ENCODE measurements at regions of chr14 and their contacts with region 1.

Region 1: GRCh38 chr14:103023881-103024473 is 33.4 kb downstream of the CDC42BPB start:
- DNase-seq: no peak
- H3K4me3 ChIP-seq: no peak overlapping the region
- H3K27ac ChIP-seq: peak overlapping the region; percentile 89
- H3K4me1 ChIP-seq: peaks cover 63% of the 10 kb centered on the region
- H3K27me3 ChIP-seq: no peaks in the 10 kb centered on the region
- CTCF ChIP-seq: no peak

Region 2: GRCh38 chr14:103141119-103141796 is 117.3 kb after region 1 on chr14:
- CTCF ChIA-PET with region 1: no interaction called
- POLR2A ChIA-PET with region 1: no interaction called
- intact Hi-C with region 1: no loop called
- DNase-seq: peak; percentile 78 to 84
- H3K4me3 ChIP-seq: no peak overlapping the region
- H3K27ac ChIP-seq: 0 out of 2 replicates have a peak overlapping the region, but pooled peaks have one; percentile 30
- H3K4me1 ChIP-seq: peaks cover 59% of the 10 kb centered on the region
- H3K27me3 ChIP-seq: no peaks in the 10 kb centered on the region
- CTCF ChIP-seq: peak; percentile 99

Region 3: DNA sequence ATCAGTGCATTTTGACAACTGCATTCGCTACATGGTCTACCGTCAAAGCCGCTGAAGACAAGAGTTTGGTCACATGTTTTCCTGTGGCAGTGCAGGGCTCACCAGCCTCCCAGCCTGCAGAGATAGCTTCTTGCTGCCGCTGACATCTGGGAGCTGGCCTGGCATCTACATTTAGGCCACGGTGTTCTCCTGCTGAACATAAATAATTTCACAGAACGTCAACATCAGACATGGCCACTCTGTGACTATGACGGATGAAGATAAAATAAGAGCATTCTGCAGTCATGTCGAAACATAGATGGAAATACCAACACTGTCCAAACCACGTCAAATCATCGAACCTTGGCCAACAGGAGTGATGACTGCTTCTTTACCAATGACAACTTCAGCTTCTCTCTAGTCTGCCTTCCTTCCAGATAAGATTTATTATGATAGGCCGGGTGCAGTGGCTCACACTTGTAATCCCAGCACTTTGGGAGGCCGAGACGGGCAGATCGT is 190.5 kb after region 1 on chr14:
- CTCF ChIA-PET with region 1: interaction called, 17 read pairs
- POLR2A ChIA-PET with region 1: no interaction called
- intact Hi-C with region 1: no loop called
- DNase-seq: no peak
- H3K4me3 ChIP-seq: no peak overlapping the region
- H3K27ac ChIP-seq: no peak overlapping the region
- H3K4me1 ChIP-seq: peaks cover 17% of the 10 kb centered on the region
- H3K27me3 ChIP-seq: no peaks in the 10 kb centered on the region
- CTCF ChIP-seq: no peak

Region 4: DNA sequence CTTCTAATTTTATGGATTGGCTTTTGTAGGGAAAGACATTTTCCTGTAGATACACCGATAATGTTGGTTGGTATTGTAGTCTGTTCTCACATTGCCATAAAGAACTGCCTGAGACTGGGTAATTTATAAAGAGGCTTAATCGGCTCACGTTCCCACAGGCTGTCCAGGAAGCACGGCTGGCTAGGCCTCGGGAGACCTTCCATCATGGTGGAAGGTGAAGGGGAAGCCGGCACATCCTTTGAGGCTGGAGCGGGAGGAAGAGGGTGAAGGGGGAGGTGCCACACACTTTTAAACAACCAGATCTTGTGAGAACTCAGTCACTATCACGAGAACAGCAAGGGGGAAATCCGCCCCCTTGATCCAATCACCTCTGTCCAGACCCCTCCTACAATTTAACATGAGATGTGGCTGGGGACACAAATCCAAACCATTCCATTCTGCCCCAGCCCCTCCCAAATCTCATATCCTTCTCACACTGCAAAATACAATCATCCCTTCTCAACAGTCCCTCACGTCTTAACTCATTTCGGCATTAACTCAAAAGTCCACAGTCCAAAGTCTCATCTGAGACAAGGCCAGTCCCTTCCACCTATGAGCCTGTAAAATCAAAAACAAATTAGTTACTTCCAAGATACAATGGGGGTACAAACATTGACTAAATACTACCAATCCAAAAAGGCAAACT is 243.4 kb after region 1 on chr14:
- CTCF ChIA-PET with region 1: no interaction called
- POLR2A ChIA-PET with region 1: no interaction called
- intact Hi-C with region 1: no loop called
- DNase-seq: no peak
- H3K4me3 ChIP-seq: no peak overlapping the region
- H3K27ac ChIP-seq: no peak overlapping the region
- H3K4me1 ChIP-seq: peaks cover 8% of the 10 kb centered on the region; the same call in 1 of the 2 replicates
- H3K27me3 ChIP-seq: no peaks in the 10 kb centered on the region
- CTCF ChIP-seq: no peak